Naive thymus-derived CD4-positive, alpha-beta T cell (primary cell): ENCODE measurements at regions of chrX and their contacts with region 1.

Region 1: GRCh38 chrX:40647307-40648197 is at the start of gene CXorf38:
- DNase-seq: peak; percentile 86 to 99 (median 95)
- ATAC-seq: peak; percentile 85
- H3K4me3 ChIP-seq: peak within 1 kb of the TSS; percentile 73
- H3K4me3 Mint-ChIP-seq: peak within 1 kb of the TSS; percentile 89 to 96 (median 94)
- H3K27ac ChIP-seq: peak within 1 kb of the TSS; percentile 89
- H3K27ac Mint-ChIP-seq: peak within 1 kb of the TSS; percentile 88 to 99 (median 95)
- H3K4me1 ChIP-seq: peaks cover 3 to 19% of the 10 kb centered on the region in 2 donors
- H3K4me1 Mint-ChIP-seq: peaks cover 16 to 51% (median 31%) of the 10 kb centered on the region in 7 donors
- H3K27me3 ChIP-seq: no peaks in the 10 kb centered on the region
- H3K27me3 Mint-ChIP-seq: no peaks in the 10 kb centered on the region
- total RNA-seq, gene CXorf38: 15.0 to 25.4 (median 22.2) TPM

Region 2: DNA sequence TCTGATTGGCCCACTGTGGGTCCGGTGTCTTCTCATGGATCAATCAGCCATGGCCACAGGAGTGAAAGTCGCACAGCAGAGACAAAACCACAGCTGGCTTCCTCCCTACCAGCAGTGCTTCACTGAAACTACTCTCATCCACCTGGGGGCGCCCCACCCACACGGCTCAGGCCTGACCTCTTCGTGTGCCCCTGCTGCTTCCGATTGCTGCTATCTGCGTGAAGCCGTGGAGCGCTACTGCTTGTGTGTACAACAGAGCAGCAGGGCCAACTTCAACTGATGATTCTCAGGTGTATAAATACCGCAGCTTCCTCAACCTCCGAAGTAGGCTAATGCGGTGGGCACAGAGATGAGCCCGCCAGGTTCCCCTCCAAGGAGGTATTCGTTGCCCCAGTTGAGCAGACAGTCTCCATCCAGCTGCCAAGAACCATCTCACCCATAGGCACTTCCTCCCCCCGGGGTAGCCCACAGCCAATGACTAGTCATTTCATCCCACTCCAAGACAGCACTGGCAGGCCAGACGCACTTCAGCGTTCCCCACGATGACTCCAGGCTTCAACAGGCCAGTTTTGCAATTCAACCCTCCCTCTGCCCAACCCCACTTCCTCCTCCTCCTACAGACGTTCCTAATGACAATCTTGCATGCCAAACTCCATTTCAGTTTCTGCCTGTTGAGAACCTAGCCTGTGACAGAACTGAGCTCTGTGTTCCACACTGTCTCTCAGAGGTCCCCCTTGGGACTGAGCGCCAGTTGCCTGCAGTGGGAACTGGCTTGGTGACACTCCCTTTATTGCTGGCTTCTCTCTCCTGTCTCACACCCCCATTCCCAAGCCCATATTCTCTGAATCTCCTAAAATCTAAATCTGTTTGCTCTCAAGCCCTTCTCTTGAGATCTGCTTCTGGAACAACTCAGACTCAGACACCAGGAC is 108.1 kb before region 1 on chrX:
- CTCF ChIA-PET with region 1: interaction called, 15 read pairs
- POLR2A ChIA-PET with region 1: interaction called, 4 read pairs
- intact Hi-C with region 1: loop called (anchors 1 to 2 kb)
- DNase-seq: peak; percentile 46 to 78 (median 65)
- ATAC-seq: peak; percentile 94
- H3K4me3 ChIP-seq: peak overlapping the region; percentile 13
- H3K4me3 Mint-ChIP-seq: peak overlapping the region; percentile 21 to 76 (median 50)
- H3K27ac ChIP-seq: no peak overlapping the region
- H3K27ac Mint-ChIP-seq: peak overlapping the region; percentile 64 to 90 (median 78)
- H3K4me1 ChIP-seq: peaks cover 4 to 6% of the 10 kb centered on the region in 2 donors
- H3K4me1 Mint-ChIP-seq: peaks cover 15 to 32% (median 24%) of the 10 kb centered on the region in 7 donors
- H3K27me3 ChIP-seq: no peaks in the 10 kb centered on the region
- H3K27me3 Mint-ChIP-seq: peaks cover 0 to 4% (median 0%) of the 10 kb centered on the region in 5 donors

Region 3: DNA sequence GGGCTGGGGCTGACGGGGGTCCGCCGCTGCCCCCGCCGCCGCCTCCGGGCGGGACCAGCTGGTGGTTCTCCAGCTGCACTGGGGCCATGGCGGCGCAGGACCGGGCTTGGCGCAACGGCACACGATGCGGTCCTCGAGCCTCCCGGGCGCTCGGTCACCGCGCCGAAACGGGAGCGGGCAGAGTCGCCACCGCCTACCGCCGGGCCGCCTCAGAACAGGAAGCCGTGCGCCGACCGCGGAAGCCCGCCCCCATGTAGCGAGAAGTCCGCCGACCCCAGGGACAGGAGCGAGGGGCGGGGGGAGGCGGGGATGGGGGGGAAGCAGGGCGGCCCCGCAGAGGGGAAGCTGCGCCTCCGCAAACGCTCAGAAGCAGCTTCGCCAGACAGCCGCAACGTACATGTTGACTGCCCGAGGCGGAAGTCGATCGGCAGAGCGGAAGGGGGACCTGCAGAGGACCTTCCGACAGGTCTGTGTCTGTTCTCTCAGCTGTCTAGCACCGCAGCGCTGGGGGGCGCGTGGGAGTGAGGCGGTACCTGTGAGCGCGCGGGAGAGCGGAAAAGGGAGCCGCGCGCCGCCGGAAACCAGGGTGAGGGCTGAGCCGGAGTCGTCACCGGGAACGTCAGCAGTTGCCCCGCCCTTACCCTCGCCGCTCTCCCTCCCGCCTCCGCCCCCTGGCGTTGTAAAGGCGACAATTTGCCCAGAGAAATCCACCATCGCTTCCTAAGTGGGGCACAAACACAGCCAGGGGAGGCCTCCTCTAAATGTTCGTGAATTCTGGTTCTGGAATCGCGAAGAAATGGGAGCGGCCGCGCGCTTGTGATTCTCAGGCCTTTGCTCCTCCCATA is 88.0 kb after region 1 on chrX and contains the start of gene MED14:
- CTCF ChIA-PET with region 1: interaction called, 3 read pairs
- POLR2A ChIA-PET with region 1: interaction called, 9 read pairs
- intact Hi-C with region 1: loop called (anchors 1 kb)
- DNase-seq: peak; percentile 74 to 97 (median 96)
- ATAC-seq: peak; percentile 94
- H3K4me3 ChIP-seq: peak within 1 kb of the TSS; percentile 95
- H3K4me3 Mint-ChIP-seq: peak within 1 kb of the TSS; percentile 87 to 99 (median 95)
- H3K27ac ChIP-seq: peak within 1 kb of the TSS; percentile 93
- H3K27ac Mint-ChIP-seq: peak within 1 kb of the TSS; percentile 96 to 100 (median 98)
- H3K4me1 ChIP-seq: peaks cover 6 to 11% of the 10 kb centered on the region in 2 donors
- H3K4me1 Mint-ChIP-seq: peaks cover 9 to 71% (median 48%) of the 10 kb centered on the region in 7 donors
- H3K27me3 ChIP-seq: no peaks in the 10 kb centered on the region
- H3K27me3 Mint-ChIP-seq: no peaks in the 10 kb centered on the region
- total RNA-seq, gene MED14: 37.9 to 49.5 (median 44.3) TPM

Region 4: GRCh38 chrX:40877887-40878286 is 230.3 kb after region 1 on chrX:
- CTCF ChIA-PET with region 1: interaction called, 7 read pairs
- POLR2A ChIA-PET with region 1: no interaction called
- intact Hi-C with region 1: loop called in 1 of 2 experiments (anchors 1 kb)
- DNase-seq: peak in 6 of 9 donors; percentile 11 to 46 (median 33)
- ATAC-seq: no peak
- H3K4me3 ChIP-seq: no peak overlapping the region
- H3K4me3 Mint-ChIP-seq: peak overlapping the region in 1 of 10 donors; percentile 9
- H3K27ac ChIP-seq: no peak overlapping the region
- H3K27ac Mint-ChIP-seq: no peak overlapping the region
- H3K4me1 ChIP-seq: no peaks in the 10 kb centered on the region
- H3K4me1 Mint-ChIP-seq: no peaks in the 10 kb centered on the region
- H3K27me3 ChIP-seq: no peaks in the 10 kb centered on the region
- H3K27me3 Mint-ChIP-seq: peaks cover 0 to 4% (median 0%) of the 10 kb centered on the region in 5 donors

Region 5: DNA sequence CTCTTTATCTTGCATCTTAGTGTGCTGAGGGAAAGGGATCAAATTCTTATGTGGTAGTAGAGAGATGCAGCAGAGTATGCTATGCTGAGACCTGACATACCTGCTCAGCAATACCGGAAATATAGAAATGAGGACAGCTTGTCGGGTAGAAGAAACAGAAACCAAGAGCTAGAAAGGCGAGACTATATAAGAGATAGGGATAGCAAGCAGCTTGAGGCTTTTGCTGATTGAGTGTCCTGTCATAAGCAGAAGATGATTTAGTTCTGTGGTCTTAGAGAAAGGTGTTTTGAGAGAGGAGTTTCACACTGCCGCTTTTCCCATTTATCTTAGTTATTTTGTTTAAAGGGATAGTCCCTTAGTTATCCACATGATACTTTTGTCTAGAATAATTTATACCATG is 469.4 kb after region 1 on chrX:
- CTCF ChIA-PET with region 1: interaction called, 3 read pairs
- POLR2A ChIA-PET with region 1: no interaction called
- intact Hi-C with region 1: loop called (anchors 1 to 5 kb)
- DNase-seq: peak in 6 of 9 donors; percentile 17 to 38 (median 33)
- ATAC-seq: peak; percentile 66
- H3K4me3 ChIP-seq: no peak overlapping the region
- H3K4me3 Mint-ChIP-seq: peak overlapping the region; percentile 18 to 71 (median 66)
- H3K27ac ChIP-seq: peak overlapping the region; percentile 55
- H3K27ac Mint-ChIP-seq: peak overlapping the region; percentile 23 to 82 (median 75)
- H3K4me1 ChIP-seq: peaks cover 29 to 32% of the 10 kb centered on the region in 2 donors
- H3K4me1 Mint-ChIP-seq: peaks cover 24 to 90% (median 67%) of the 10 kb centered on the region in 7 donors
- H3K27me3 ChIP-seq: no peaks in the 10 kb centered on the region
- H3K27me3 Mint-ChIP-seq: no peaks in the 10 kb centered on the region

Region 6: GRCh38 chrX:41250867-41251266 is 603.3 kb after region 1 on chrX:
- CTCF ChIA-PET with region 1: no interaction called
- POLR2A ChIA-PET with region 1: no interaction called
- intact Hi-C with region 1: loop called (anchors 1 to 5 kb)
- DNase-seq: no peak
- ATAC-seq: no peak
- H3K4me3 ChIP-seq: no peak overlapping the region
- H3K4me3 Mint-ChIP-seq: no peak overlapping the region
- H3K27ac ChIP-seq: no peak overlapping the region
- H3K27ac Mint-ChIP-seq: no peak overlapping the region
- H3K4me1 ChIP-seq: no peaks in the 10 kb centered on the region
- H3K4me1 Mint-ChIP-seq: peaks cover 0 to 8% (median 5%) of the 10 kb centered on the region in 7 donors
- H3K27me3 ChIP-seq: no peaks in the 10 kb centered on the region
- H3K27me3 Mint-ChIP-seq: peaks cover 0 to 4% (median 0%) of the 10 kb centered on the region in 5 donors